ENCODE measurements at regions of chr11 and their contacts with region 1.

Region 1: GRCh38 chr11:47407746-47408590 is at the start of gene SLC39A13:
- DNase-seq: peak; percentile 79
- ATAC-seq: peak; percentile 92
- H3K4me3 ChIP-seq: peak within 1 kb of the TSS; percentile 93
- H3K27ac ChIP-seq: peak within 1 kb of the TSS; percentile 95
- H3K4me1 ChIP-seq: peaks cover 17% of the 10 kb centered on the region
- H3K27me3 ChIP-seq: no peaks in the 10 kb centered on the region
- CTCF ChIP-seq: peak; percentile 71 to 96 (median 79); a peak in 4 of 6 replicates
- EP300 ChIP-seq: peak in 1 of 2 experiments; percentile 83; a peak in 2 of 4 replicates
- POLR2A ChIP-seq: peak; percentile 88
- RAD21 ChIP-seq: peak; percentile 87
- polyA plus RNA-seq, gene SLC39A13: 0.23 to 0.60 TPM

Region 2: DNA sequence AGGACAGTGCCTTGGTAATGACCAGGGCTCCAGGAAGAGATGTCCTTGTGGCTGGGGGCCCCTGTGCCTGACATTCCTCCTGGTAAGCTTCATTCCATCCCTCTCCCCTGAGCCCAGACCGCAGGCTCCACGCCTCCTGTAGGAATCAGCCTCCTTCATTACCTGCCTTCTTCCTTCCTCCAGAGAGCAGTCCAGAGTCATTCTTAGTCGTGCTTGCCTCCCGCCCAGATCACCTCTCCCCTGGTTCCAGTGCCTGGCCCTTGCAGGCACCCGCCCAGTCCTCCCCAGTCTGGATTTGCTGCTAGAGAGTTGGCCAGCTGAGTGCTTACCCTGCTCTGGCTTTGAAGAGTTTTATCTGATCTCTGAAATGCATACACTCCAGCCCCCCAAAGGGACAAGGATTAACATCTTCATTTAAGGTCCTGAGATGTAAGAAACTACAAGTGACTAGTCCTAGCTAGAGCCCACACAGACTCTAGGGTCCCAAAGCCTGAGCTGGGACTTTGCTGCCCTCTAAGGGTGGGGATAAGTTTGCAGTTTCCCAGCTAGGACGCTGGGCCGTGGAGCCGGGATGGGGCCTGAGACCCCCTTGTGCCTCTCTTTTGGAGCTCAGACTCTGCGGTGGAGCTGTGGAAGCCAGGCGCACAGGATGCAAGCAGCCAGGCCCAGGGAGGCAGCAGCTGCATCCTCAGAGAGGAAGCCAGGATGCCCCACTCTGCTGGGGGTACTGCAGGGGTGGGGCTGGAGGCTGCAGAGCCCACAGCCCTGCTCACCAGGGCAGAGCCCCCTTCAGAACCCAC is 148.6 kb before region 1 on chr11:
- CTCF ChIA-PET with region 1: interaction called, 8 read pairs
- POLR2A ChIA-PET with region 1: no interaction called
- RAD21 ChIA-PET with region 1: interaction called, 11 read pairs
- SMC1A ChIA-PET with region 1: interaction called, 6 read pairs
- in situ Hi-C with region 1: no loop called
- intact Hi-C with region 1: no loop called
- DNase-seq: no peak
- ATAC-seq: peak; percentile 94
- H3K4me3 ChIP-seq: no peak overlapping the region
- H3K27ac ChIP-seq: no peak overlapping the region
- H3K4me1 ChIP-seq: no peaks in the 10 kb centered on the region
- H3K27me3 ChIP-seq: no peaks in the 10 kb centered on the region
- CTCF ChIP-seq: peak; percentile 68 to 81 (median 76)
- EP300 ChIP-seq: no peak
- POLR2A ChIP-seq: no peak
- RAD21 ChIP-seq: peak; percentile 75

Region 3: DNA sequence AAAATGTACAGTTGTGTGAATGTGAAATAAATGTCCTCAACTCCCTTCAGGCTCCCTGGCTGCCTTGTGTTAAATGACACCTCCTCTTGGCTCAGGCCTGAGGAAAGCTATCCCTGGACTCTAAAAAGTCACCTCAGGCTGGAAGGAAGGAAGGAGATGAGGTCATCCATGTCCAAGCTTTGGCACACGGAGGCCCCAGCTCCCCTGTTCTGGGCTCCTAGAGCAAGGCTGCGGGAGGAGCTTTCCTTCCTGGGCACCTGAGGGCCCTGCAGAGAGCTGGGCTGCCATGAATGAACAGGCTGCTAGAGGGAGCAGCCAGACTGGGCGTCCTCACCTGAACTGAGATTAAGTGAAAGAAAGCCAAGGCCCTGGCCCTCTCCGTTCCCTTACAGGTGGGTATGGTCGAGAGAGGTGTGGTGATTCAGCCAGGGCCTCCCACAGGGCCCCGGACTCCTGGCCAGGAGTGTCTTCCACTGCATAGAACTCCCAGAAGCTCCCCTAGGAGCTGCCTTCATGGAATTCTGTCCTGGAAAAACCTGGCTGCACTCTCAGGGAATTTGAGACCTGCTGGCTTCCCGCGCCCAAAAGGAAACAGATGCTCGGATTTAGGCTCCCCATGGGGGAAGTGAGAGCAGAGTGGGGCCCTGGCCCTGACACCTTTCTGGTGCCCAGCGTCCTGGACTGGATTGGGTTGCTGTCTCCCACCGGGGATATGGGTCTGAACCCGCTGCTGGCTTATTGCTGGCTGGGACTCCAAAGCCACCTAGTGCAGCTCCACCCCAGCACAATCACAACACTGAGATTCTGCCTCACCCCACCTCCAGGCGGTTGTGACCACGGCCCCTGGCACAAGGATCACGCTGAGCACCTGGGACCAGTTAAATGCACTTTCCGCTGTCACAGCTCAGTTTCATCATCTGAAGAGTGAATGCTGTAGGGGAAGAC is 77.7 kb before region 1 on chr11:
- CTCF ChIA-PET with region 1: interaction called, 4 read pairs
- POLR2A ChIA-PET with region 1: no interaction called
- RAD21 ChIA-PET with region 1: interaction called, 4 read pairs
- SMC1A ChIA-PET with region 1: interaction called, 3 read pairs
- in situ Hi-C with region 1: no loop called
- intact Hi-C with region 1: loop called (anchors 10 kb)
- DNase-seq: no peak
- ATAC-seq: no peak
- H3K4me3 ChIP-seq: no peak overlapping the region
- H3K27ac ChIP-seq: no peak overlapping the region
- H3K4me1 ChIP-seq: peaks cover 12% of the 10 kb centered on the region
- H3K27me3 ChIP-seq: no peaks in the 10 kb centered on the region
- CTCF ChIP-seq: peak in 1 of 3 experiments; percentile 3; a peak in 1 of 6 replicates
- EP300 ChIP-seq: no peak
- POLR2A ChIP-seq: no peak; the same call in 1 of the 2 replicates
- RAD21 ChIP-seq: no peak

Region 4: DNA sequence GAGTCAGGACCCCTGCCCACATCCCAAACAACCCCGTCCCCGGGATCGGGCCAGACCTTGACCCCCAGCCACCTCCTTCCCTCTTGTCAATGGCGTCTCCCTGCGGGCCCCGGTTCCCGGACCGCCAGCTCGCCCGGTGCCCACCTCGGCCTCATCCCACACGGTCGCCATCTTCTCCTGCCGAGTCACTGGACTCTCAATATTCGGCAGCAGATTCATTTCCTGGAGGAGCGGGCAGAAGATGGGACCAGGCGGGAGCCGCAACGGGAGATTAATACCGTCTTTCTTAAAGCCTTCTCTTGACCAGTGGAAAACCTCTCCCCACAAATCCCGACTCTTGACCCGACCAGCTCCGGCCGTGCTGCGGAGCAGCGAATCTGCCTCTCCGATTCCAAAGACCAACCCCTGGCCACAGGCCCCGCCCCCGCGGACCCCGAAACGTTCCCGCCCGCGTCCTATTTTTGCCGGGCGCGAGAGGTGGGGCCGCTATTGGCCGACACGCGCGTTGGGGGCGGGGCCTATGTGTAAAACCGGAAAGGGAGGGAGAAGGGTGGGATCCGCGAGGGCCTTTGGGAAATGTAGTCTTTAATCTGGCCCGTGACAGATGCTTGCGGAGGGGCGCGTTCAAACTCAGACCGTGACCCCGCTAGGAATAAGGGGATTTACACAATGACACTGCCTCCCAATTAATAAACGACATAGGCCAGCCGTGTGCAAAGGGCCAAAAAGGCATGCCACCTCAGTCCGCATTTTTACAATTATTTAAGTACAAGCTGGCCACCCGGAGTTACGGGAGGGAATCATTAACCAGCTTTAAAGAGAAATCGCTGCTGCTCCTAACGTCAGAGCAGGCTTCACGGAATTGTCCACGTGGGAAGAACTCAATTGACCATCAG is 18.3 kb after region 1 on chr11 and contains the start of gene PSMC3:
- CTCF ChIA-PET with region 1: interaction called, 39 read pairs
- POLR2A ChIA-PET with region 1: interaction called, 3 read pairs
- RAD21 ChIA-PET with region 1: interaction called, 4 read pairs
- SMC1A ChIA-PET with region 1: interaction called, 3 read pairs
- in situ Hi-C with region 1: no loop called
- intact Hi-C with region 1: no loop called
- DNase-seq: peak; percentile 71
- ATAC-seq: peak; percentile 95
- H3K4me3 ChIP-seq: peak within 1 kb of the TSS; percentile 97
- H3K27ac ChIP-seq: peak within 1 kb of the TSS; percentile 99
- H3K4me1 ChIP-seq: peaks cover 12% of the 10 kb centered on the region
- H3K27me3 ChIP-seq: no peaks in the 10 kb centered on the region
- CTCF ChIP-seq: no peak
- EP300 ChIP-seq: peak in 1 of 2 experiments; percentile 99; a peak in 2 of 4 replicates
- POLR2A ChIP-seq: peak; percentile 93
- RAD21 ChIP-seq: no peak
- polyA plus RNA-seq, gene PSMC3: 39.5 to 54.3 TPM

Region 5: DNA sequence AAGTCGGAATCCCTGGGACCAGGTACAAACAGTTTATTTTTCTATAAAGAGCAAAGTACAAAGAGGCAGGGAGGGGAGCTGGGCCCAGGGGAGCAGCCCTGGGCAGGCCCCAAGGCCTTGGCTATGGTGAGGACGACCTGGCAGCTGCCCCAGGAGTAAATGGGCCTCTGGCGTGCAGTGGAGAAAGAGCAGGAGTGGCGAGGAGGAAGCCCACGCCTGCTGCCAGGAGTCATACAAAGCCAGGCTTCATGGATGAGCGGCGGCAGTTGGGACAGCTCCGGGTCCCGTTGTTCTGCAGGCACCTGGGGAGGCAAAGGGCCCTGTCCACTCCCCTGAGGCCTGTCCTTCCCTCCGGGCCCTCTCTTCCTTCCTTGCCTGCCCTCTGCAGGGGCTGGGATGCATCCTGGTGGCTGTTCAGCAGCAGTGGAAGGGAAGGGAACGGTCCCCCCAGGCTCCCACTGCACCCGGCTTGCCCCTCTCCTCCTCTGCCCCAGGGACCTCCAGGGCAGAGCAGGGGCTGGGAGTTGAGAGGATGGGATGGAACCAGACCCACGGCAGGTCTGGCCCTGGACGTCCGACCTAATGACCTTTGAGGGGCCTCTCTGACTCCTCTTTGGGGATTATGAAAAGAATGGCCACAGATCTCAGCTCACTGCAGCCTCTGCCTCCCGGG is 29.9 kb after region 1 on chr11:
- CTCF ChIA-PET with region 1: no interaction called
- POLR2A ChIA-PET with region 1: no interaction called
- RAD21 ChIA-PET with region 1: no interaction called
- SMC1A ChIA-PET with region 1: no interaction called
- in situ Hi-C with region 1: no loop called
- intact Hi-C with region 1: no loop called
- DNase-seq: no peak
- ATAC-seq: no peak
- H3K4me3 ChIP-seq: no peak overlapping the region
- H3K27ac ChIP-seq: no peak overlapping the region
- H3K4me1 ChIP-seq: no peaks in the 10 kb centered on the region
- H3K27me3 ChIP-seq: no peaks in the 10 kb centered on the region; a peak in 1 of 4 replicates
- CTCF ChIP-seq: no peak
- EP300 ChIP-seq: no peak
- POLR2A ChIP-seq: no peak
- RAD21 ChIP-seq: no peak

Region 6: DNA sequence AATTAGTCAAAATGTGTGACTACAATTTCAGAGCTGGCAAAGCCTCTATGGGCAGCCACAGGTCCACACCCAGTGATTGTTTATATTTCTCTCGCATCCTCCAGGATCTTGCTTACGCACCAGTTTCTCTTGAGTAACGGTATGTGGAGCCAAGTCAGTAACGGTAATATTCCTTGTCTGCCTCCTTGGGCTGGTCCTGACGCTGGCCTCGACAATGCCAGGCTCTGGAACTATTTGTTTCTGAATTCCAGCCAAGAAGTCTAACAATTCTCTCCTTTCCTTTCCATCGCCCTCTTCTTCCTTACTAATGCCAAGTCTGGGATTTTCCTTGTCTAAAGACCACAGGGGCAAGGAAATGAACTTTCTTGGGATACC is 450.2 kb after region 1 on chr11:
- CTCF ChIA-PET with region 1: interaction called, 8 read pairs
- POLR2A ChIA-PET with region 1: no interaction called
- RAD21 ChIA-PET with region 1: no interaction called
- SMC1A ChIA-PET with region 1: interaction called, 3 read pairs
- in situ Hi-C with region 1: no loop called
- intact Hi-C with region 1: loop called (anchors 10 kb)
- DNase-seq: no peak
- ATAC-seq: no peak
- H3K4me3 ChIP-seq: no peak overlapping the region
- H3K27ac ChIP-seq: peak overlapping the region; percentile 41; the same call in 1 of the 2 replicates
- H3K4me1 ChIP-seq: peaks cover 66% of the 10 kb centered on the region
- H3K27me3 ChIP-seq: no peaks in the 10 kb centered on the region
- CTCF ChIP-seq: no peak
- EP300 ChIP-seq: no peak
- POLR2A ChIP-seq: no peak
- RAD21 ChIP-seq: no peak

Measured in GM12878 (cell line).